ENCODE measurements at regions of chr3 and their contacts with region 1.

Region 1: DNA sequence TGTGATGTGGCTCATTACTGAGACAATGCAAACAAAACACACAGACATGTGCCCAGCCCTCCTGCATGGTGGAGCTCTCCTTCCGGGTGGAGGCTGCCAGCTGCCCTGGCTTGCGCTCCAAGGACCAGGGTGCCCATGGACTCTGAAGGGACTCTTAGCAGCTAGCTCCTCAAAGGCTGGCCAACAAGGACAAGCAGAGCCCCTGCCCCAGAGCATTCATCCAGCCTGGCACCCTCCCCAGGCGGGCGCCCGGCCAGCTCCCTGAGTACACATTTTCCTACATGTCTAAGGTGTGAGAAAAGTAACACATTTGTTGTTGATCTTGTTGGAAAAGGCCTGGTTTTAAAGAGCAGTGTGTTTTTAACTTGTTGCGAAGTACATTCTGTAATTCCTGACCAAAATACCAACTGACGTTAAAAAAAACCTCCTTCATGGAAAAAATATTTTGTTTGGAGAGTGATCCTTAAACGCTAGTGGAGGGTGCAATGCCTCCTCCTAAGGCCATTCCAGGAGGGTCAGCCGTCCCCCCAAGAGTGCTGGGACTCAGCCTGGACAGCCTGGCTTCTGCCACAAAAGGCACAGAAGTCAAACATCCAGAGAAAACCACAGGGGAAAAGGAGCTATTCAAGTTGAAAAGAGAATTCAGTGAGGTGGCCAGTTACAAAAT is 86.9 kb downstream of the KLF15 start:
- DNase-seq: peak; percentile 82
- H3K4me3 ChIP-seq: no peak overlapping the region
- H3K27ac ChIP-seq: peak overlapping the region; percentile 31 to 61
- H3K4me1 ChIP-seq: peaks cover 10% of the 10 kb centered on the region
- H3K27me3 ChIP-seq: no peaks in the 10 kb centered on the region
- CTCF ChIP-seq: no peak
- POLR2A ChIP-seq: no peak

Region 2: GRCh38 chr3:126005951-126006350 is 264.3 kb before region 1 on chr3:
- intact Hi-C with region 1: no loop called
- DNase-seq: no peak
- H3K4me3 ChIP-seq: no peak overlapping the region
- H3K27ac ChIP-seq: no peak overlapping the region
- H3K4me1 ChIP-seq: no peaks in the 10 kb centered on the region
- H3K27me3 ChIP-seq: no peaks in the 10 kb centered on the region
- CTCF ChIP-seq: no peak
- POLR2A ChIP-seq: no peak

Region 3: GRCh38 chr3:126329927-126330725 is 59.8 kb after region 1 on chr3:
- intact Hi-C with region 1: no loop called
- DNase-seq: no peak
- H3K4me3 ChIP-seq: no peak overlapping the region
- H3K27ac ChIP-seq: no peak overlapping the region
- H3K4me1 ChIP-seq: no peaks in the 10 kb centered on the region
- H3K27me3 ChIP-seq: no peaks in the 10 kb centered on the region
- CTCF ChIP-seq: no peak
- POLR2A ChIP-seq: no peak

Region 4: DNA sequence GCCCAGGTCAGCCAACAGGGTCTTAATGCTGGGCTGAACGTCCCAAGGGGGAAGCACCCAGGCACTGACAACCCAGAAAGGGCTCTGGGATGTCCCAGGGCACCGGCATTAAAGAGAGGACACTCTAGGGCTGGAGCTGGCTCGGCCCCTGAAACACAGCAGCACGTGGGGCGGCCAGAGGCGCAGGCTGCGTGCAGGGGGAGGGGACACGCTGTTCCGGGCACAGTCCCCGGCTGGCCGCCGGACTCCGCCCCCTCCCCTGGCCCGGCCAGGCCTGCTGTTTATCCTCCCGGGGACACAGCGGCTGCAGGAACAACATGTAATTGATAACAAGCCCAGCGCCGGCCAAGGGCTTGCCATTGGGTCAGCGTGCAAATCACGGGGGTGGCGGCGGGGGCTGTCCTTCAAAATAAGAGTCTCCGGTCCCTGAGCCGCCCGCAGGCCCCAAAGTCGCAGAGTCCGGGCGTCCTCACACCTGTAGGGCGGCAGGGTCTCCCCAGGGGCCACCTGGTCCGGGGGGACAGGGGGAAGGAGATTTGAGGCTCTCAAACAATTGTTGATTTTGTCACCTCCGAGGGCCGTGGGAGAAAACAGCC is 85.6 kb after region 1 on chr3:
- intact Hi-C with region 1: loop called (anchors 1 kb)
- DNase-seq: peak; percentile 98
- H3K4me3 ChIP-seq: peak overlapping the region; percentile 96 to 98
- H3K27ac ChIP-seq: peak overlapping the region; percentile 97 to 98
- H3K4me1 ChIP-seq: peaks cover 10% of the 10 kb centered on the region
- H3K27me3 ChIP-seq: no peaks in the 10 kb centered on the region
- CTCF ChIP-seq: peak in 1 of 4 experiments; percentile 15
- POLR2A ChIP-seq: peak; percentile 48

Measured in prostate gland (tissue), 2 donors.